ENCODE measurements at regions of chr9 and their contacts with region 1.

Region 1: GRCh38 chr9:137302176-137302994 is at the start of gene NRARP:
- DNase-seq: peak; percentile 95
- ATAC-seq: peak; percentile 86
- H3K4me3 ChIP-seq: peak within 1 kb of the TSS; percentile 38 to 63 (median 56)
- H3K4me3 Mint-ChIP-seq: peak within 1 kb of the TSS; percentile 83
- H3K27ac ChIP-seq: peak within 1 kb of the TSS in 1 of 2 donors; percentile 67
- H3K27ac Mint-ChIP-seq: peak within 1 kb of the TSS; percentile 20
- H3K4me1 ChIP-seq: peaks cover 46 to 49% of the 10 kb centered on the region in 2 donors
- H3K4me1 Mint-ChIP-seq: peaks cover 21% of the 10 kb centered on the region
- H3K27me3 ChIP-seq: peaks cover 0 to 69% (median 34%) of the 10 kb centered on the region in 4 experiments
- H3K27me3 Mint-ChIP-seq: peaks cover 8% of the 10 kb centered on the region
- CTCF ChIP-seq: peak; percentile 79
- total RNA-seq, gene NRARP: 11.4 and 11.5 TPM in 2 replicates

Region 2: GRCh38 chr9:137316012-137316976 is 13.9 kb after region 1 on chr9:
- CTCF ChIA-PET with region 1: interaction called, 25 read pairs
- POLR2A ChIA-PET with region 1: interaction called, 6 read pairs
- intact Hi-C with region 1: no loop called
- DNase-seq: peak; percentile 46
- ATAC-seq: peak; percentile 19
- H3K4me3 ChIP-seq: peak overlapping the region in 2 of 5 experiments; percentile 39 to 42
- H3K4me3 Mint-ChIP-seq: peak overlapping the region; percentile 29
- H3K27ac ChIP-seq: no peak overlapping the region
- H3K27ac Mint-ChIP-seq: no peak overlapping the region
- H3K4me1 ChIP-seq: peaks cover 21 to 30% of the 10 kb centered on the region in 2 donors
- H3K4me1 Mint-ChIP-seq: peaks cover 10% of the 10 kb centered on the region
- H3K27me3 ChIP-seq: peaks cover 0 to 11% (median 4%) of the 10 kb centered on the region in 4 experiments
- H3K27me3 Mint-ChIP-seq: no peaks in the 10 kb centered on the region
- CTCF ChIP-seq: no peak

Region 3: GRCh38 chr9:137326445-137327065 is 24.2 kb after region 1 on chr9:
- CTCF ChIA-PET with region 1: interaction called, 25 read pairs
- POLR2A ChIA-PET with region 1: interaction called, 9 read pairs
- intact Hi-C with region 1: loop called (anchors 1 kb)
- DNase-seq: peak; percentile 94
- ATAC-seq: peak; percentile 90
- H3K4me3 ChIP-seq: peak overlapping the region; percentile 28 to 54 (median 42)
- H3K4me3 Mint-ChIP-seq: peak overlapping the region; percentile 85
- H3K27ac ChIP-seq: peak overlapping the region; percentile 62 to 77
- H3K27ac Mint-ChIP-seq: peak overlapping the region; percentile 87
- H3K4me1 ChIP-seq: peaks cover 13 to 23% of the 10 kb centered on the region in 2 donors
- H3K4me1 Mint-ChIP-seq: peaks cover 27% of the 10 kb centered on the region
- H3K27me3 ChIP-seq: peaks cover 0 to 6% (median 3%) of the 10 kb centered on the region in 4 experiments
- H3K27me3 Mint-ChIP-seq: peaks cover 11% of the 10 kb centered on the region
- CTCF ChIP-seq: no peak

Region 4: DNA sequence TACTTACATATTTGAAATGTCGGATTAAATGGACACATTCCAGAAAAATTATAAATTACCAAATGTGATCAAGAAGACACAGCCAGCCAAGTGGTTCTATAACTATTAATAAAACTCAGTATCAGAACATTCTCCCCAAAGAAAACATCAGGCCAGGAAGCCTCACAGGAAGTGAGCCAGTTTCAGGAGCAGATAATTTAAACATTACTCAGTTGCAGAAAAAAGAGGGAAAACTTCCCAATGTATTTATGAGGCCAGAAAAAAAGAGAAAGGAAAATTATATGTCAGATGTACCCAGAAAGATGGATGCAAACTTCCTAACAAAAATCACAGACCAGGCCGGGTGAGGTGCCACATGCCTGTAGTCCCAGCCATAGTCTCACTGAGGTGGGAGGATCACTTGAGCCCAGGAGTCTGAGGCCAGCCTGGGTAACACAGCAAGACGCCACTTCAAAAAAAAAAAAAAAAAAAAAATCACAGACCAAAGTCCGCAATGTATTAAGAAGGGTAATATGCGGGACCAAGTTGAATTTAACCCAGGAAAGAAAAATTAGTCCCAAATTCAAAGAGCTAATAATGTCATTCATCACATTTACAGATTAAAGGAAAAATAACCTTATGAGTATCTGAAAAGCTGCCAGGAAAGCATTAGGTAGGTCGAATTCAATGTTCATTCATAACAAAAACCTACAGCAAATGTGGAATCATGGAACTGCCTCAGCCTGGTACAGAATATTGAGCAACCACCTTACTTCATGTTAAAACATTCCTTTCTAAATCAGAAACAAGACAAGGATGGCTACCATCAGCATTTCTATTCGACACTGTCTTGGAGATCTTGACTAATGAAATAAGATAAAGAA is 36.9 kb after region 1 on chr9:
- CTCF ChIA-PET with region 1: no interaction called
- POLR2A ChIA-PET with region 1: no interaction called
- intact Hi-C with region 1: no loop called
- DNase-seq: no peak
- ATAC-seq: no peak
- H3K4me3 ChIP-seq: no peak overlapping the region
- H3K4me3 Mint-ChIP-seq: no peak overlapping the region
- H3K27ac ChIP-seq: no peak overlapping the region
- H3K27ac Mint-ChIP-seq: no peak overlapping the region
- H3K4me1 ChIP-seq: peaks cover 0 to 3% of the 10 kb centered on the region in 2 donors
- H3K4me1 Mint-ChIP-seq: peaks cover 4% of the 10 kb centered on the region
- H3K27me3 ChIP-seq: no peaks in the 10 kb centered on the region
- H3K27me3 Mint-ChIP-seq: peaks cover 4% of the 10 kb centered on the region
- CTCF ChIP-seq: no peak

Region 5: GRCh38 chr9:137445275-137445807 is 143.0 kb after region 1 on chr9:
- CTCF ChIA-PET with region 1: interaction called, 15 read pairs
- POLR2A ChIA-PET with region 1: no interaction called
- intact Hi-C with region 1: no loop called
- DNase-seq: peak; percentile 88
- ATAC-seq: peak; percentile 89
- H3K4me3 ChIP-seq: no peak overlapping the region
- H3K4me3 Mint-ChIP-seq: no peak overlapping the region
- H3K27ac ChIP-seq: no peak overlapping the region
- H3K27ac Mint-ChIP-seq: no peak overlapping the region
- H3K4me1 ChIP-seq: peaks cover 7 to 23% of the 10 kb centered on the region in 2 donors
- H3K4me1 Mint-ChIP-seq: peaks cover 8% of the 10 kb centered on the region
- H3K27me3 ChIP-seq: peaks cover 0 to 20% (median 7%) of the 10 kb centered on the region in 4 experiments
- H3K27me3 Mint-ChIP-seq: peaks cover 11% of the 10 kb centered on the region
- CTCF ChIP-seq: peak; percentile 83